ENCODE measurements at regions of chr7 and their contacts with region 1.

Region 1: DNA sequence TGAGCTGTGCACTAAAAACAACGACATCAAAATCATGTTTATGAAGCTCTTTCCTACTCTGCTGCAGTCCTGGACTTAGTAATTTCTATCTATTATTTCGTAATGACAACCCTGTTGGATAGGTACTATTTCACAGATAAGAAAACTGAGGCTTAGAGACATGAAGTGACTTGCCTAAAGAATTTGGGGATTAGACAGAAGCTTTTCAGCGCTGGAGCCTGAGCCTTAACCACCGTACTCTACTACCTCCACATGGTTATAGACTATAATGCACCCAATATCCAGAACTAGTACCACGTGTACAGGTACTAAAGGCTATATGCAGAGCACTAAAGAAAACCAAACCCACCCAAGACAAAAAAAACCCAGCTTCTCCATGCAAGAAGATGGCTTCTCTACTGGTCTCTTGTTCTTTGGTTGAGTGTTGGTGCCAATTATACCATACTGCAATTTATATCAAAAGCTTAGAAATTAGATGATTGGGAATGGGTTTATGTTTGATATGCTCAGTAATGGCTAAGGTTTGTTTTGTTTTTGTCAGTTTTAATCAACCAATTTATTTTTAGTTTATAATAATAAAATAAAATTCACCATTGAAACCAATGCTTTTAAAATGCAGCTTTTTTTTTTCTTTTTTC is 6.5 kb upstream of the SNX10 start:
- DNase-seq: peak in 1 of 35 experiments; percentile 46
- ATAC-seq: peak; percentile 55 to 93 (median 69)
- H3K4me3 ChIP-seq: no peak overlapping the region
- H3K4me3 Mint-ChIP-seq: no peak overlapping the region
- H3K27ac ChIP-seq: no peak overlapping the region
- H3K27ac Mint-ChIP-seq: no peak overlapping the region
- H3K4me1 ChIP-seq: peaks cover 0 to under 1% of the 10 kb centered on the region in 2 experiments
- H3K4me1 Mint-ChIP-seq: peaks cover 2 to 4% (median 4%) of the 10 kb centered on the region in 3 donors
- H3K27me3 ChIP-seq: no peaks in the 10 kb centered on the region
- H3K27me3 Mint-ChIP-seq: no peaks in the 10 kb centered on the region

Region 2: DNA sequence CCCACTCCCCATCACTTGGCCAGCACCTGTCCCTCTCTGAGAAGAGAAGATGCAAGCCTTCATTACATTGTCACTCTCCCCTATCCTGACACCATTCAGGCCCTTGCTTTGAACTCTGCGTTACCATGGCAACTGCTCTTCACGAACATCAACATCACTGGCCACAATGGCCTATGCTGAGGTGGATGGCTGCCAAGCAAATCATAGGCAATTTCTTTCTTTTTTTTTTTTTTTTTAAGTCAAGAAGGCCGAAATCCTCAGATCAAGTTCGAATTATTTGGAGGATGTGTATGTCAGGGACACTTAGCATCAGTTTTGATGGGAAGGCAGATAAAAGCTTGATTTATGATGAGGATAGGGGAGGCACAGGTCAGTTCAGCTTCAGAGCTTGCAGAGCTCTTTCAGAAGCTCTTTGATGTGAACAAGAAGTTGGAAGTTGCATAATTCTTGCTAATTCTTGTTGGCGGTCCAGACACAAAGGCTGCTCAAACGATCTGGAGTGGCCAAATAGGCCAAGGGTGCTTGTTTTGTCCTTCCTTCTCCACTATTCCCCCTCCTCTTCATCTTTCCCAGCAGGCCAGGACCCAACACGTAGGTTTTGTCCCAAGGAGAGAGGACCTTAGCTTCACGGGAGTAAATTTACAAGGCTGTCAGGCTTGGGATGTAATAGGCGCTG is 877.0 kb before region 1 on chr7:
- CTCF ChIA-PET with region 1: no interaction called
- POLR2A ChIA-PET with region 1: no interaction called
- DNase-seq: no peak
- ATAC-seq: no peak
- H3K4me3 ChIP-seq: no peak overlapping the region
- H3K4me3 Mint-ChIP-seq: no peak overlapping the region
- H3K27ac ChIP-seq: no peak overlapping the region
- H3K27ac Mint-ChIP-seq: no peak overlapping the region
- H3K4me1 ChIP-seq: no peaks in the 10 kb centered on the region
- H3K4me1 Mint-ChIP-seq: no peaks in the 10 kb centered on the region
- H3K27me3 ChIP-seq: no peaks in the 10 kb centered on the region
- H3K27me3 Mint-ChIP-seq: peaks cover 12 to 18% of the 10 kb centered on the region in 2 donors

Region 3: DNA sequence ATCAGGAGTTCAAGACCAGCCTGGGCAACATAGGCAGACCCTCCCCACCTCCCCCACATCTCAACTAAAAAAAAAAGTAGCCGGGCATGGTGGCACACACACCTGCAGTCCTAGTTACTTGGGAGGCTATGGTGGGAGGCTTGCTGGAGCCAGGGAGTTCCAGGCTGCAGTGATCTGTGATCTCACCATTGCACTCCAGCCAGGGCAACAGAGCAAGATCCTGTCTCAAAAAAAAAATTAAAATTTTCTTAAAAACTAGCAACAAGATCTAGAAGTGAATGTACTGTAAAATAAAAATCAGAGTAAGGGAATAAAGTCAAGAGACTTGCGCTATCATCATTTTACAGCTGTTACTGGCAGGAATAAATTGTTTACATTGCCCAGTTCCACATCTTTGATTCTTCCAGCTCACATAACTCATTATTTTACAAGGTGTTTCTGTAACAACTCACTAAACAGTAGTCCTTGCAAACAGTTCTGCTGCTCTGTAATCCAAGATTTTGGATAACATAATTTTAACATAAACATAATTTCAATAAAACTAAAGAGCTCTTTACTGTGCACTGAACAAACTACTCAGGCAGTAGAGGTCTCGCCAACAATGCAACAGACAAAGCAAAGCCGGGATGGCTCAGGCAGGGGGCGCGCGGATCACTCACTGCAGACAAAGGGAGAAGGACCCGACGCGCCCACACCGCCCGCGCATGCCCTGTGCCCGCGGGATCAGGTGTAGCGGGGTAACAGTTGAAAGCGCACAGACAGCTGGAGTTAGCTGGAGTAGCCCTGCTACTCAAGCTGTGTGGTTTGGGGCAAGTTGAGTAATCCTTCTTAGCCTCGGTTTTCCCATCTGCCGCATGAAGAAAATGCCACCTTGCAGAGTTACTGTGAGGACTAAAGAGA is 206.4 kb before region 1 on chr7:
- CTCF ChIA-PET with region 1: interaction called, 3 to 11 read pairs
- POLR2A ChIA-PET with region 1: no interaction called
- DNase-seq: peak; percentile 69 to 89 (median 82)
- ATAC-seq: peak; percentile 99 to 100 (median 100)
- H3K4me3 ChIP-seq: no peak overlapping the region
- H3K4me3 Mint-ChIP-seq: peak overlapping the region; percentile 9 to 38 (median 31)
- H3K27ac ChIP-seq: no peak overlapping the region
- H3K27ac Mint-ChIP-seq: no peak overlapping the region
- H3K4me1 ChIP-seq: peaks cover 0 to 5% of the 10 kb centered on the region in 2 experiments
- H3K4me1 Mint-ChIP-seq: peaks cover 7 to 11% (median 9%) of the 10 kb centered on the region in 3 donors
- H3K27me3 ChIP-seq: peaks cover 0 to 25% of the 10 kb centered on the region in 2 experiments
- H3K27me3 Mint-ChIP-seq: peaks cover 18 to 31% of the 10 kb centered on the region in 2 donors

Region 4: GRCh38 chr7:26179826-26180497 is 105.2 kb before region 1 on chr7:
- CTCF ChIA-PET with region 1: no interaction called
- POLR2A ChIA-PET with region 1: no interaction called
- DNase-seq: no peak
- ATAC-seq: peak in 1 of 4 experiments; percentile 10
- H3K4me3 ChIP-seq: no peak overlapping the region
- H3K4me3 Mint-ChIP-seq: no peak overlapping the region
- H3K27ac ChIP-seq: peak overlapping the region; percentile 10
- H3K27ac Mint-ChIP-seq: peak overlapping the region in 1 of 2 donors; percentile 80
- H3K4me1 ChIP-seq: peaks cover 0 to 15% of the 10 kb centered on the region in 2 experiments
- H3K4me1 Mint-ChIP-seq: peaks cover 55 to 60% (median 57%) of the 10 kb centered on the region in 3 donors
- H3K27me3 ChIP-seq: no peaks in the 10 kb centered on the region
- H3K27me3 Mint-ChIP-seq: no peaks in the 10 kb centered on the region

Measured in T-cell (primary cell).